ENCODE measurements at regions of chr4 and their contacts with region 1.

Region 1: GRCh38 chr4:83201761-83202160 is 82.8 kb downstream of the COQ2 start:
- DNase-seq: no peak
- H3K4me3 ChIP-seq: no peak overlapping the region
- H3K4me3 Mint-ChIP-seq: no peak overlapping the region
- H3K27ac ChIP-seq: no peak overlapping the region
- H3K27ac Mint-ChIP-seq: peak overlapping the region in 1 of 7 donors; percentile 3
- H3K4me1 ChIP-seq: no peaks in the 10 kb centered on the region
- H3K4me1 Mint-ChIP-seq: peaks cover 0 to 4% (median 2%) of the 10 kb centered on the region in 4 donors
- H3K27me3 ChIP-seq: no peaks in the 10 kb centered on the region
- H3K27me3 Mint-ChIP-seq: no peaks in the 10 kb centered on the region

Region 2: DNA sequence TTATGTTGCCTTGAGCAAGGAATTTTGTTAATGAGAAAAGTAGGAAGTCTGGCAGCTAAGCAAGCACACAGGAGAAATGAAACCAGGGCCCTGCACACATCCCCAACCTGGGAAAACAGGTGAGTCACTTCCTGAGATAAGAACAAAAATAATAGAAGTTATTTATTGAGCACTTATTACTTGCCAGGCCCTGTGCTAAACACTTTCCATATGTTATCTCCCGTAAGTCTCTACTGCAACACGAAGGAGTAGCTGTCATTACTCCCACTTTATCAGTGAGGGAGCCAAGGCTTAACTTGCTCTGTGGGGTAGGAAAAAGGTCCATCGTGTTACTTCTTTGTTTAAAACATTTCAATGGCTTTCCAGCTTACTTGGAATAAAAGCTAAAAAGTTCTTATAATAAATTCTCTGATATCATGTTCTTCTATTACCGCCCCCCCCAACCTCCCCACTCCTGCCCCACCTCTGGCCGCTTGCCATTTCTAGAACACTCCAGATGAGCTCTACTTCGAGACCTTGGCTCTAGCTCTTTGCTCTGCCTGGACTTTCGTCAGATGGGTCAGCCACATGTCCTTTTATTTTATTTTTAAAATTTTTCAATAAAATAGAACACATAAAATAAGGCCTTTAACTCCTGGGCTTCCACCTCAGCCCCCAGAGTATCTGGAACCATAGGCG is 51.0 kb before region 1 on chr4:
- CTCF ChIA-PET with region 1: no interaction called
- POLR2A ChIA-PET with region 1: no interaction called
- intact Hi-C with region 1: no loop called
- DNase-seq: no peak
- H3K4me3 ChIP-seq: no peak overlapping the region
- H3K4me3 Mint-ChIP-seq: no peak overlapping the region
- H3K27ac ChIP-seq: no peak overlapping the region
- H3K27ac Mint-ChIP-seq: no peak overlapping the region
- H3K4me1 ChIP-seq: peaks cover 6% of the 10 kb centered on the region
- H3K4me1 Mint-ChIP-seq: peaks cover 9 to 17% (median 10%) of the 10 kb centered on the region in 4 donors
- H3K27me3 ChIP-seq: no peaks in the 10 kb centered on the region
- H3K27me3 Mint-ChIP-seq: no peaks in the 10 kb centered on the region

Region 3: DNA sequence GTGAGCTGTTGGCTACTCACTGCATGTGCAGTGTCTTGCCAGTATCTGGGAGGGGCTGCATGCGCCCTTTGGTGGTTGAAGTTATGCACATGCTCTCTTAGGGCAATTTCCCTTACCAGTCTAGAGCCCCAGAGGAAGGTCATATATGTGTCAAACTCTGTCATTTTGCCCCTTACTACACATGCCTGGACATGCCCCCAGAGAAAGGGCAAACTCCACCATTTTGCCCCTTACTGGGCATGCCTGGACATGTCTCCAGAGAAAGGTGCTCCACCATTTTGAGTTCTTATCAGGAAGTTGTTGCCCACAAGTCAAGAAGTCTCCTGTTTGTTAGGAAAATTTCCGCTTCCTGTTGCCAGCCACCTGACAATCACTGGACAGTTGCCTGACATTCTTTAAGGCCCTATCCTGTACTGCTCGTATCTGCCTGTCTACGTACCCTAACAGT is 30.8 kb before region 1 on chr4:
- CTCF ChIA-PET with region 1: no interaction called
- POLR2A ChIA-PET with region 1: no interaction called
- intact Hi-C with region 1: no loop called
- DNase-seq: no peak
- H3K4me3 ChIP-seq: no peak overlapping the region
- H3K4me3 Mint-ChIP-seq: no peak overlapping the region
- H3K27ac ChIP-seq: no peak overlapping the region
- H3K27ac Mint-ChIP-seq: peak overlapping the region in 2 of 7 donors; percentile 46 to 49
- H3K4me1 ChIP-seq: no peaks in the 10 kb centered on the region
- H3K4me1 Mint-ChIP-seq: peaks cover 6 to 16% (median 10%) of the 10 kb centered on the region in 4 donors
- H3K27me3 ChIP-seq: no peaks in the 10 kb centered on the region
- H3K27me3 Mint-ChIP-seq: no peaks in the 10 kb centered on the region

Region 4: DNA sequence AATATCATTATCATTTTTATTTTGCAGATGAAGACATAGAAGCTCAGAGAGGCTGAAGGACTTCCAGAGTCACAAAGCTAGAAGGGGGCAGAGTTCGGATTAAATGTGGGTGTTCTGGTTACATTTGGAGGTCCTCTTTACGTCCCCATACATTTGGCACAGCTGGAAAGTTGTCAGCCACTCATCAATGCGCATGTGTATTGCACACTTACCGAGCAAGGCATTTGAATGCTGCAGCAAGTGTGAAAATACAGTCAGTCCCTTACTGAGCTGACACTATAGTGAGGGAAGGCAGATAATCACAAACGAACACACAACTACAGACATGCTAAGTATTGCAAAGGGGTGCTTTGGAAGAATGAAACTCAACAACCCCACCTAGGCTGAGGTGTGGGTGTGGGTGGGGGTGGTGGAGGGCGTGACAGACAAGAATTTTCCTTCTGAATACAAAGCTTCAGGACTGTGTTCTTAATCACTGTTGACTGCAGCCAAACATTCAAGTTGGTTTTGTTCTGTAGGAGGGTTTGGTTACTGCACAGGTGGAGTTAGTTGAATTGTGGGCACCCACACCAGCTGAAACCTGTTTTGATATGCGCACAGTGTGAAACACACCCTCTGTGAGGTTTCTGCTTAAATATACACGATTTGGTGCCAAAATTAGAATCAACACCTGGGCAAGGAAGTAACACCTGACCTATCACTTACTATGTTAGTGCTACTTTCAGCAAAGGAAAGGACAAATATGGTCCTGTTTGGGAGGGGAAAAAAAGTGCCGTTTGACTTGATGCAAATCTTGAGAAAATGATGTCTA is 10.5 kb after region 1 on chr4:
- CTCF ChIA-PET with region 1: interaction called, 18 read pairs
- POLR2A ChIA-PET with region 1: interaction called, 12 read pairs
- intact Hi-C with region 1: no loop called
- DNase-seq: peak; percentile 84 to 93 (median 90)
- H3K4me3 ChIP-seq: peak overlapping the region in 1 of 2 donors; percentile 22
- H3K4me3 Mint-ChIP-seq: peak overlapping the region; percentile 50 to 88 (median 74)
- H3K27ac ChIP-seq: peak overlapping the region; percentile 45
- H3K27ac Mint-ChIP-seq: peak overlapping the region; percentile 45 to 99 (median 96)
- H3K4me1 ChIP-seq: peaks cover 80% of the 10 kb centered on the region
- H3K4me1 Mint-ChIP-seq: peaks cover 57 to 80% (median 68%) of the 10 kb centered on the region in 4 donors
- H3K27me3 ChIP-seq: no peaks in the 10 kb centered on the region
- H3K27me3 Mint-ChIP-seq: no peaks in the 10 kb centered on the region

Measured in CD4-positive, alpha-beta memory T cell (primary cell).